A673 (cell line): ENCODE measurements at regions of chr5 and their contacts with region 1.

Region 1: GRCh38 chr5:76256116-76256889 is 146.8 kb upstream of the IQGAP2 start:
- DNase-seq: peak; percentile 86
- H3K4me3 ChIP-seq: no peak overlapping the region
- H3K27ac ChIP-seq: no peak overlapping the region
- H3K4me1 ChIP-seq: peaks cover 9% of the 10 kb centered on the region
- H3K27me3 ChIP-seq: no peaks in the 10 kb centered on the region
- CTCF ChIP-seq: peak; percentile 77

Region 2: GRCh38 chr5:74673011-74673790 is 1583.1 kb before region 1 on chr5:
- CTCF ChIA-PET with region 1: no interaction called
- POLR2A ChIA-PET with region 1: no interaction called
- intact Hi-C with region 1: loop called (anchors 10 kb)
- DNase-seq: peak; percentile 66
- H3K4me3 ChIP-seq: no peak overlapping the region
- H3K27ac ChIP-seq: no peak overlapping the region
- H3K4me1 ChIP-seq: no peaks in the 10 kb centered on the region
- H3K27me3 ChIP-seq: peaks cover 10% of the 10 kb centered on the region
- CTCF ChIP-seq: peak; percentile 62

Region 3: GRCh38 chr5:74927336-74927735 is 1329.0 kb before region 1 on chr5:
- CTCF ChIA-PET with region 1: interaction called, 10 read pairs
- POLR2A ChIA-PET with region 1: no interaction called
- intact Hi-C with region 1: no loop called
- DNase-seq: no peak
- H3K4me3 ChIP-seq: no peak overlapping the region
- H3K27ac ChIP-seq: no peak overlapping the region
- H3K4me1 ChIP-seq: peaks cover 9% of the 10 kb centered on the region
- H3K27me3 ChIP-seq: no peaks in the 10 kb centered on the region
- CTCF ChIP-seq: no peak

Region 4: GRCh38 chr5:75734913-75735789 is 521.2 kb before region 1 on chr5:
- CTCF ChIA-PET with region 1: no interaction called
- POLR2A ChIA-PET with region 1: no interaction called
- intact Hi-C with region 1: loop called (anchors 1 kb)
- DNase-seq: peak; percentile 67
- H3K4me3 ChIP-seq: no peak overlapping the region
- H3K27ac ChIP-seq: no peak overlapping the region
- H3K4me1 ChIP-seq: no peaks in the 10 kb centered on the region
- H3K27me3 ChIP-seq: no peaks in the 10 kb centered on the region
- CTCF ChIP-seq: peak; percentile 71

Region 5: GRCh38 chr5:76074487-76075065 is 181.7 kb before region 1 on chr5:
- CTCF ChIA-PET with region 1: interaction called, 5 read pairs
- POLR2A ChIA-PET with region 1: no interaction called
- intact Hi-C with region 1: loop called (anchors 2 kb)
- DNase-seq: peak; percentile 56
- H3K4me3 ChIP-seq: no peak overlapping the region
- H3K27ac ChIP-seq: no peak overlapping the region
- H3K4me1 ChIP-seq: no peaks in the 10 kb centered on the region
- H3K27me3 ChIP-seq: peaks cover 30% of the 10 kb centered on the region
- CTCF ChIP-seq: peak; percentile 74

Region 6: DNA sequence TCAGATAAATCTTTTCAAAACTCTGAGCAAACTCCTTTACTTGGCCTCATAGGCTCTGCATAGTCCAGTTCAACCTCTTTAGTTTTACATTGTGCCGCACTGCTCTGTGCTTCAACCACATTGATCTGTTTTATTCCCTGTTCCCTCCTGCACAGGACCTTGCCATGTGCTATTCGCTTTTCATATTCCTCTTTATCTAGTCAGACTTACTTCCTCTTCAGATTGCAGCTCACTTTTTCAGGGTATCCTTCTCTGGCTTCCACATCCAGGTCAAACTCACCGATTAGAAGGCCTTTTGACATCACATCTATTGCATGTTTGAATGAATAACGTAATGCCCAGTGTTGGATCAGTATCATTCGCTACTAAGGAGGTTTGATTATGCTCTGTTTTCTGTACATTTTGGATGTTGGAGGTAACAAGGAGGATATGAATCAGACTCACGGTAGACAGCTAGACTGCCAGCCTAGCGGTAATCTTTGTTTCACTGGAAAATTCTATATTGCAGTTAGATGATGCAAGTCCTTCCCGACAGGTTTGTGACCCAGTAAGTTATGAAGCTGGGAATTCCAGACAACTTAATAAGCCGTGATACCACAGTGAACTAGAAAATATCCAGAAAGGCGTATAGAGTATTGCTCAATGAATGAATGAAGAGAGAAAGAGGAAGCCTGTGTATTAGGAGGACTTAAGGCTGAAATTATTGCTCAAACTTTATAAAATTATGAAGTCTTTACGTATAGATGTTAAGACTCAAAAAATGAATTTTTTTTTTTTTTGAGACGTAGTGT is 212.5 kb after region 1 on chr5:
- CTCF ChIA-PET with region 1: no interaction called
- POLR2A ChIA-PET with region 1: no interaction called
- intact Hi-C with region 1: no loop called
- DNase-seq: no peak
- H3K4me3 ChIP-seq: no peak overlapping the region
- H3K27ac ChIP-seq: no peak overlapping the region
- H3K4me1 ChIP-seq: peaks cover 11% of the 10 kb centered on the region
- H3K27me3 ChIP-seq: no peaks in the 10 kb centered on the region
- CTCF ChIP-seq: no peak

Region 7: GRCh38 chr5:76544268-76544926 is 288.1 kb after region 1 on chr5:
- CTCF ChIA-PET with region 1: interaction called, 3 read pairs
- POLR2A ChIA-PET with region 1: no interaction called
- intact Hi-C with region 1: loop called (anchors 10 kb)
- DNase-seq: peak; percentile 81
- H3K4me3 ChIP-seq: no peak overlapping the region
- H3K27ac ChIP-seq: no peak overlapping the region
- H3K4me1 ChIP-seq: peaks cover 40% of the 10 kb centered on the region
- H3K27me3 ChIP-seq: no peaks in the 10 kb centered on the region
- CTCF ChIP-seq: peak; percentile 89

Region 8: DNA sequence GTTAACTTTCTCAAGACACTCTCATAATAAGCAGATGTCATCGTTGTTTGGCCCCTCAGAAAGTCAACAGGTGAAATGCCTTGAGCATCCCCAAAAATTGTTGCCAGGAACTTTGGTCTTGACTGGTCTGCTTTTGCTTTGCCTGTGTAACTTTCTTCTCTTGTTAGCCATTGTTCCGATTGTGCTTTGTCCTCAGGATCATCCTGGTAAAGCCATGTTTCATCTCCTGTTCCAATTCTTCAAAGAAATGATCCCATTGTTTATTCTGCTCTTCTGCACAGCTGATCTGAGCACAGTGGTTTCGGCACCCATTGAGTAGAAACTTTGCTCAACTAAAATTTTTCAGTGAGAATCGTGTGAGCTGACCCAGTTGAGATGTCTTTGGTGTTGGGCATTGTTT is 838.9 kb after region 1 on chr5:
- CTCF ChIA-PET with region 1: no interaction called
- POLR2A ChIA-PET with region 1: no interaction called
- intact Hi-C with region 1: no loop called
- DNase-seq: no peak
- H3K4me3 ChIP-seq: no peak overlapping the region
- H3K27ac ChIP-seq: no peak overlapping the region
- H3K4me1 ChIP-seq: no peaks in the 10 kb centered on the region
- H3K27me3 ChIP-seq: no peaks in the 10 kb centered on the region
- CTCF ChIP-seq: no peak